ENCODE measurements at regions of chr18 and their contacts with region 1.

Region 1: GRCh38 chr18:23515911-23516546 is 12.7 kb downstream of the RMC1 start:
- DNase-seq: peak; percentile 48 to 58
- H3K4me3 ChIP-seq: no peak overlapping the region
- H3K27ac ChIP-seq: no peak overlapping the region
- H3K4me1 ChIP-seq: no peaks in the 10 kb centered on the region
- H3K27me3 ChIP-seq: no peaks in the 10 kb centered on the region
- CTCF ChIP-seq: peak; percentile 80

Region 2: GRCh38 chr18:23330423-23330822 is 185.6 kb before region 1 on chr18:
- CTCF ChIA-PET with region 1: no interaction called
- POLR2A ChIA-PET with region 1: no interaction called
- intact Hi-C with region 1: no loop called
- DNase-seq: peak in 1 of 2 experiments; percentile 15
- H3K4me3 ChIP-seq: peak overlapping the region; percentile 71
- H3K27ac ChIP-seq: peak overlapping the region; percentile 93
- H3K4me1 ChIP-seq: peaks cover 24% of the 10 kb centered on the region
- H3K27me3 ChIP-seq: no peaks in the 10 kb centered on the region
- CTCF ChIP-seq: no peak

Region 3: DNA sequence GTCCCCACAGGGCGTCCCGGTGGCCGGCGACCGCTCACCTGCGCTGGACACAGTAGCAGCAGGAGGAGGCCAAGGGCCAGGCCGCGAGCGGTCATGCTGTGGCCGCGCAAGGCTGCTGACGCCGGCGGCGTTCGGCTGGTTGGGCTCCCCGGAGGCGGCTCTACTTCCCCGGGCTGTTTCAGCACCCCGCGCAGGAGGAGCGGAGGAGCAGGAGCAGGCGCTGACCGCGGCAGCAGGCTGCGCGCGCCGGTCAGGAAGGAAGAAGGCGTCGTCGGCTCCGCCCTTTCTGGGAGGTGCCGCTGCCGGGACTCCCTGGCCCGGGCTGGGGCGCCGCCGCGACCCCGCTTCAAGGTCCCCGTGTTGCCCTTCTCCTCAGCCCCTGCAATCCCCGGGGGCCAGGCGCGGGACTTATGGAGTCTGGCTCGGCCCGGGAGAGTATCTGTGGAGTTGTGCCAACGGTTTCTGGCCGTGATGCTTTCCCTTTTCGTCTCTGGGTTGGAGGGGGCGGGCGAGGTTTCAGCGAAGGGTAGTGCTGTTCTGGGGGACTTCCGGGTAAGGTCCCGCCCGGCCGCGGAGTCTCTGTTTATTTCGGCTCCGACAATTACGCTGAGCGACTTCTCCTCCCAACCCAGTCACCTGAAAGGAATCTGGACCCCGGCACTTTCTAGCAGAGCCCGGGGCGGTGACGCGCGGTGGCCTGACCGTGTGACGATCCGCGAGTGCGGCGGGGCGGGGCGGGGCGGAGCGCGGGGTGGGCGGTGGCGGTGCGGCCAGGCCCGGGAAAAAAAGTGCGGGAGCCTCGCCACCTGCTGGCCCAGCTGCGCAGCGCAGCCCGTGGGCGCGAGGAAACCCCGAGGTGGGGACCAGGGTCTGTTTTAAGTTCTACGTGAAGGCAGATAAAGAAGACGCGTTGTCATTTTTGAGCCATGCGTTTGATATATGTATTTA is 70.5 kb after region 1 on chr18 and contains the start of gene NPC1:
- CTCF ChIA-PET with region 1: no interaction called
- POLR2A ChIA-PET with region 1: no interaction called
- intact Hi-C with region 1: loop called (anchors 5 kb)
- DNase-seq: peak; percentile 88 to 92
- H3K4me3 ChIP-seq: peak within 1 kb of the TSS; percentile 82
- H3K27ac ChIP-seq: peak within 1 kb of the TSS; percentile 97
- H3K4me1 ChIP-seq: peaks cover 19% of the 10 kb centered on the region
- H3K27me3 ChIP-seq: no peaks in the 10 kb centered on the region
- CTCF ChIP-seq: peak; percentile 75
- total RNA-seq, gene NPC1: 39.6 and 40.9 TPM in 2 replicates

Region 4: DNA sequence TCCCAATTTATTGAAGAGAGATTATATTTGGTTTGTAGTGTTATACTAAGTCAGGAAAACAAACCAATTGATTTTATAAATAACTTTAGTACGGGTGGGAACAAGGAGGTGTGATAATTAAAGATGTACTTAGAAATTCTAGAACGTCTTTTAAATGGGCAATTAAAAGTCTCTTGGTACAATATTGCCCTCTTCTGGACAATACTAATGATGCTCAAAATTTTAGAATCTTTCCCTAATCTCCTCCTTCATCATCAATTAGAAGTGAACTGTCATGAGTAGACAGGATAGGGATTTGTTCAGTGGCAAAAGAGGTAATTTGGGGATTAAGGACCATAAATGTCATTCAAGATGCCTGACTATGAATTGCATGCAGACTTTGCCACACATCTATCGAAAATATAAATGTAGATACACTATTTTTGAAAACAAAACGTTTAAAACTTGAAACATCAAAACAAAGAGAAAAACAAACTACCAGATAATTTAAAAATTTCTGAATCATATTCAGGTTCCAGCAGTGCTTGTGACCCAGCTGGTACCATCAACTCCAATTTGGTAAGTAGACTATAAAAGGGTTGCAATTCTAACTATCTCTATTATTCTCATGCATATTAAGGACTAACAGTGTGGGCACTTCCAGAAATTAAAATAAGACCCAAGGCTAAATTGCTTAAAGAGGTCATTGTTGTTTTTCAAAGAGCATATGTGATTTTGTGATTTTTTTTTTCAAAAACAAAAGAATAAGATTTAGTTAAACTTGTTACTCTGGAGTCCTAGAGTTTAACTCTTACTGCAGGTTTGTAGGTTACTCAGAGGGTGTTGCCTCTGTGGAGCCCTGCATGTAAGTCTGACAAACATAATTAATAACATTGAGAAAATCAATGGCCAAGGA is 296.8 kb after region 1 on chr18:
- CTCF ChIA-PET with region 1: no interaction called
- POLR2A ChIA-PET with region 1: no interaction called
- intact Hi-C with region 1: loop called (anchors 2 kb)
- DNase-seq: no peak
- H3K4me3 ChIP-seq: no peak overlapping the region
- H3K27ac ChIP-seq: no peak overlapping the region
- H3K4me1 ChIP-seq: no peaks in the 10 kb centered on the region
- H3K27me3 ChIP-seq: no peaks in the 10 kb centered on the region
- CTCF ChIP-seq: peak; percentile 64

Region 5: DNA sequence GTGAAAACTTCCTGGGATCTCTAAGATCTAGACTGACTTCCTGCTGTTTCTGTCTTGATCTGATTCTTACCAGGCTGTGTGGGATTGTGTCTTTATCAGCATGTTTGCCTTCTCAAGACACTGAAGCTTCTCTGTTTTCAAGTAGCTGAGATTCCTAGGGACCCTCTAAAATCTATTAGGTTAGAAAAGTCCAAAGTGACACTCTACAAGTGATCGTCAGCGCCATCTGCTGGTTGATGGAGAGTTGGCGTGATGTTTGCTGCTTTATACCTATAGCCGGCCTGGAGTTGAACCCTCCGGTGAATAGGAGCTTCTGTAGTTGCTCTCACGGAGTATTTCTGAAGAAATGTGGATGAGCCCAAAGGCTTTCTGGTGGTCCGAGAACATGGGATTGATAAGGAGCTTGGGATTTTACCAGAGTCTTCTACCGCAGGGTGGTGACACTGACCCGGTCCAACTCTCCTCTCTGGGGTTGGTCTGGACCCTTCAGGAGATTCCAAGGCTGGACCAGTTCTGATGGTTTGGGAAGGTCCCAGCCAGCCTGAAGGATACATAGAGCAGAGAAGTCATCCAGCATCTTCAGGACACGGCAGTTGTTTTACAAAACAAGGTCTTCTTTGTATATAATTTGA is 402.5 kb after region 1 on chr18:
- CTCF ChIA-PET with region 1: interaction called, 4 read pairs
- POLR2A ChIA-PET with region 1: no interaction called
- intact Hi-C with region 1: loop called (anchors 5 kb)
- DNase-seq: peak in 1 of 2 experiments; percentile 38
- H3K4me3 ChIP-seq: no peak overlapping the region
- H3K27ac ChIP-seq: no peak overlapping the region
- H3K4me1 ChIP-seq: no peaks in the 10 kb centered on the region
- H3K27me3 ChIP-seq: no peaks in the 10 kb centered on the region
- CTCF ChIP-seq: peak; percentile 82

Measured in PC-9 (cell line).